B cell (primary cell): ENCODE measurements at regions of chr2 and their contacts with region 1.

Region 1: GRCh38 chr2:31170071-31170698 is 31.9 kb upstream of the GALNT14 start:
- DNase-seq: peak; percentile 74
- ATAC-seq: peak; percentile 94
- H3K4me3 ChIP-seq: no peak overlapping the region
- H3K4me3 Mint-ChIP-seq: no peak overlapping the region
- H3K27ac ChIP-seq: no peak overlapping the region
- H3K27ac Mint-ChIP-seq: peak overlapping the region; percentile 43
- H3K4me1 ChIP-seq: peaks cover 9 to 20% of the 10 kb centered on the region in 2 donors
- H3K4me1 Mint-ChIP-seq: peaks cover 27% of the 10 kb centered on the region
- H3K27me3 ChIP-seq: no peaks in the 10 kb centered on the region
- H3K27me3 Mint-ChIP-seq: peaks cover under 1% of the 10 kb centered on the region
- CTCF ChIP-seq: peak; percentile 95

Region 2: DNA sequence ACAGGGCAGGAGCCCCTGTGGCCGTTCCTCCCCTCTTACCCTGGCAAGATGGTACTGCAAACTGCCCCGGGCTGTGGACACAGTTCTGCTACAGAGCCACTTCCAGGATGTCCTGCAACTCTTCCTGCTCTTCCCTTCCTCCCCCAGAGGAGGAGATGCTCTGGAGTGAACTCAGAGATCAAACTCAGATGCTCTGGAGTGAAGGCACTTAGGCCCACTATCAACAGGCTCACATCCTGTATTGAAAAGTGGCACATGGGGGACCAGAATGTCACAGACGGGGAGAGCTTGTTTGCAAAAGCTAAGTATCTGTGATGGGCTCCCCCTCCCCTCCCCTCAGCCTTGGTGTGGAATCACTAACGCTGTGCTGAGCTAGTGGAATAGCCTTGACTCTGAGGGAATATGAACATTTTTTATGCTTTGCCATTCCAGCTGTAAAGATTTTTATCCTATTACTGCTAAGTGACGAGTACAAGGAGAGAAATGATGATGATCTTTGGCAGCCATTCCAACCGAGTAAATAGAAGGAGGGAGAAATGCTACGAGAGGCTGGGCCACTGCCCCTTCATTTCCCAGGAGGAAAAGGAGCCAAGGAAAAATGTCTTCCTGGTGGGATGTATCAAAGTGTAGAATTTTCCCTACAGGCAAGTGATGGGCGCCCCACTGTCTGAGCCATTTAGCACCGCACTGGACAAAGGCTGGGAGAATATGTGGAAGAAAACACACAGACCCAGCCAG is 184.5 kb before region 1 on chr2:
- CTCF ChIA-PET with region 1: no interaction called
- POLR2A ChIA-PET with region 1: no interaction called
- intact Hi-C with region 1: no loop called
- DNase-seq: no peak
- ATAC-seq: no peak
- H3K4me3 ChIP-seq: no peak overlapping the region
- H3K4me3 Mint-ChIP-seq: no peak overlapping the region
- H3K27ac ChIP-seq: no peak overlapping the region
- H3K27ac Mint-ChIP-seq: no peak overlapping the region
- H3K4me1 ChIP-seq: no peaks in the 10 kb centered on the region
- H3K4me1 Mint-ChIP-seq: no peaks in the 10 kb centered on the region
- H3K27me3 ChIP-seq: no peaks in the 10 kb centered on the region
- H3K27me3 Mint-ChIP-seq: no peaks in the 10 kb centered on the region
- CTCF ChIP-seq: no peak

Region 3: GRCh38 chr2:31089645-31090044 is 80.5 kb before region 1 on chr2:
- CTCF ChIA-PET with region 1: interaction called, 20 read pairs
- POLR2A ChIA-PET with region 1: no interaction called
- intact Hi-C with region 1: no loop called
- DNase-seq: no peak
- ATAC-seq: no peak
- H3K4me3 ChIP-seq: no peak overlapping the region
- H3K4me3 Mint-ChIP-seq: no peak overlapping the region
- H3K27ac ChIP-seq: no peak overlapping the region
- H3K27ac Mint-ChIP-seq: no peak overlapping the region
- H3K4me1 ChIP-seq: no peaks in the 10 kb centered on the region
- H3K4me1 Mint-ChIP-seq: no peaks in the 10 kb centered on the region
- H3K27me3 ChIP-seq: no peaks in the 10 kb centered on the region
- H3K27me3 Mint-ChIP-seq: no peaks in the 10 kb centered on the region
- CTCF ChIP-seq: no peak

Region 4: DNA sequence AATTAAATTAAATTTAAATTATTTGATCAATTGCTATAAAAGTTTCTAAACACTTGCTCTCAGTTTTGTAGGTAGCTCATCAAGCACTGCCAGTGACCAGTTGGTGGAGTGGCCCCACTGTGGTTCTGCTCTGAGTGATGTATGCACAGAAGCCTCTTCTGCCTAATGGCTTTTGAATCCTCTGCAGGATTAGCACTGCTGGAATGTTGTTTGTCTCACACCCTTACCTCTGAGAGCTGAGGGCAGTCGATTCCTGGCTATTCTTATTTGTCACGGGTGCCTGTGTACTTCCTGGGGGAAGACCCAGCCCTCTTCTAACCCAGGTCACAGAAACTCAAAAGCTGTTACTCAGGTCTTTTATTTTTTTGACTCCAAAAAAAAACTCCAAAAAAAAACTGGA is 37.6 kb after region 1 on chr2:
- CTCF ChIA-PET with region 1: interaction called, 17 read pairs
- POLR2A ChIA-PET with region 1: no interaction called
- intact Hi-C with region 1: no loop called
- DNase-seq: no peak
- ATAC-seq: peak; percentile 36
- H3K4me3 ChIP-seq: no peak overlapping the region
- H3K4me3 Mint-ChIP-seq: no peak overlapping the region
- H3K27ac ChIP-seq: peak overlapping the region in 1 of 2 donors; percentile 23
- H3K27ac Mint-ChIP-seq: no peak overlapping the region
- H3K4me1 ChIP-seq: peaks cover 13 to 16% of the 10 kb centered on the region in 2 donors
- H3K4me1 Mint-ChIP-seq: peaks cover 21% of the 10 kb centered on the region
- H3K27me3 ChIP-seq: no peaks in the 10 kb centered on the region
- H3K27me3 Mint-ChIP-seq: no peaks in the 10 kb centered on the region
- CTCF ChIP-seq: no peak

Region 5: GRCh38 chr2:31233741-31234682 is 63.8 kb after region 1 on chr2 and contains the start of gene EHD3:
- CTCF ChIA-PET with region 1: interaction called, 18 read pairs
- POLR2A ChIA-PET with region 1: no interaction called
- intact Hi-C with region 1: loop called (anchors 5 kb)
- DNase-seq: peak; percentile 86
- ATAC-seq: peak; percentile 97
- H3K4me3 ChIP-seq: peak within 1 kb of the TSS; percentile 46 to 79 (median 70)
- H3K4me3 Mint-ChIP-seq: peak within 1 kb of the TSS; percentile 94
- H3K27ac ChIP-seq: peak within 1 kb of the TSS; percentile 62 to 69
- H3K27ac Mint-ChIP-seq: peak within 1 kb of the TSS; percentile 80
- H3K4me1 ChIP-seq: peaks cover 28 to 35% of the 10 kb centered on the region in 2 donors
- H3K4me1 Mint-ChIP-seq: peaks cover 45% of the 10 kb centered on the region
- H3K27me3 ChIP-seq: no peaks in the 10 kb centered on the region
- H3K27me3 Mint-ChIP-seq: no peaks in the 10 kb centered on the region
- CTCF ChIP-seq: no peak
- total RNA-seq, gene EHD3: 60.4 and 60.5 TPM in 2 replicates

Region 6: DNA sequence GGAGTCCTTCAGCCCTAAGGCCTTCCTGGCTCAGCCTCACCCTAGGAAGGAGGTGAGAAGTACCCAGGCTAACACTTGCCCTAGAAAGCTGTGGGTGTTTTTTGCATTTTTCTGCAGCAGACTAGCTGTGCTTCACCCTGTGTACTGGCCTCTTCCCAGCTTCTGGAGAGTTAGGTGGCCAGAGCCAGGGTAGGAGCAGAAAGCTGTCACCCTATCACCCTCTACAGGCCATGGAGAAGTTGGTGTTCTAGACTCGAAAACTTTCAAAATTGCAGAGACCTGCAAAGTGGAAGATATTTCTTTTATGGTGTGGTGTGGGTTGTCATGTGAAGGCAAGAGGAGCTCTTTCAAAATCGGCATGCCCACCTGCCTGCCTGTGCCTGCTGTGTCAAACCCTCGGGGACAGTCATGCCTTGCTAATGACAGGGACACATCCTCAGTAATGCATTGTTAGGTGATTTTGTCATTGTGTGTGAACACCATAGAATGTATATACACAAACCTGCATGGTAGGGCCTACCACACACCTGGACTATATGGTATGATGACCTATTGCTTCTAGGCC is 93.5 kb after region 1 on chr2:
- CTCF ChIA-PET with region 1: interaction called, 14 read pairs
- POLR2A ChIA-PET with region 1: no interaction called
- intact Hi-C with region 1: no loop called
- DNase-seq: no peak
- ATAC-seq: peak; percentile 17
- H3K4me3 ChIP-seq: no peak overlapping the region
- H3K4me3 Mint-ChIP-seq: no peak overlapping the region
- H3K27ac ChIP-seq: no peak overlapping the region
- H3K27ac Mint-ChIP-seq: no peak overlapping the region
- H3K4me1 ChIP-seq: peaks cover 8 to 9% of the 10 kb centered on the region in 2 donors
- H3K4me1 Mint-ChIP-seq: peaks cover 9% of the 10 kb centered on the region
- H3K27me3 ChIP-seq: no peaks in the 10 kb centered on the region
- H3K27me3 Mint-ChIP-seq: no peaks in the 10 kb centered on the region
- CTCF ChIP-seq: no peak